Activated T-helper 1 cell treated with anti-CD3 and anti-CD28 coated beads, Interleukin-12 subunit alpha, Interleukin-12 subunit beta, Interleukin-2, Interleukin-4 antibody, amounts not matched to agents 30 ng/mL and 10 ng/mL and 1 ng/mL, durations not matched to agents 14 hours and 24 hours and 36 hours (primary cell): ENCODE measurements at regions of chr5 and their contacts with region 1.

Region 1: GRCh38 chr5:111742177-111742994 is 14.6 kb downstream of the NREP start:
- DNase-seq: no peak
- H3K4me3 Mint-ChIP-seq: peak overlapping the region; percentile 40
- H3K27ac Mint-ChIP-seq: peak overlapping the region; percentile 7
- H3K4me1 Mint-ChIP-seq: peaks cover 53% of the 10 kb centered on the region
- H3K27me3 Mint-ChIP-seq: no peaks in the 10 kb centered on the region

Region 2: DNA sequence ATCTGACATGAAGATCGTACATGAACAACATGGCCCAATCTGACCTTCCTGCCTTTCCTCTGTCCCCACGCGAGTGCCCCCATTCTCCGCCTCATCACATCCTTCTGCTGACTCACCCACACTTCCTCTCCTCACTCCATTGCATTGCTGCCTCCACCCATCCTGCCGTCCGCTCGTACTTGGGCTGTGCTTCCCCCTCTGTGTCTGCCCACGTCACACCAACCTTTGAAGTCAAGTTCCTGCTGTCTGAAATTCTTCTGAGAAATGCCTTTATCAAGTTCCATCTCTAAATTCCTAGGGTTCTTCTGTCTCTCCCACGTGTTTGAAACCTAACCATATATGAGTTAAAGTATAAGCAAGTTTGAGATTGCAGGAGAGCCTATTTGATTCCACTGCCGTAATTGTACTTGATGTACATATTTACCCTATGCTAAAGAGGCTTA is 212.1 kb before region 1 on chr5:
- intact Hi-C with region 1: loop called (anchors 5 kb)
- DNase-seq: peak; percentile 82
- H3K4me3 Mint-ChIP-seq: peak overlapping the region; percentile 38
- H3K27ac Mint-ChIP-seq: peak overlapping the region; percentile 89
- H3K4me1 Mint-ChIP-seq: peaks cover 33% of the 10 kb centered on the region
- H3K27me3 Mint-ChIP-seq: no peaks in the 10 kb centered on the region

Region 3: GRCh38 chr5:112106878-112107277 is 364.5 kb after region 1 on chr5:
- intact Hi-C with region 1: no loop called
- DNase-seq: no peak
- H3K4me3 Mint-ChIP-seq: no peak overlapping the region
- H3K27ac Mint-ChIP-seq: no peak overlapping the region
- H3K4me1 Mint-ChIP-seq: no peaks in the 10 kb centered on the region
- H3K27me3 Mint-ChIP-seq: peaks cover 2% of the 10 kb centered on the region